ENCODE measurements at regions of chr3 and their contacts with region 1.

Region 1: DNA sequence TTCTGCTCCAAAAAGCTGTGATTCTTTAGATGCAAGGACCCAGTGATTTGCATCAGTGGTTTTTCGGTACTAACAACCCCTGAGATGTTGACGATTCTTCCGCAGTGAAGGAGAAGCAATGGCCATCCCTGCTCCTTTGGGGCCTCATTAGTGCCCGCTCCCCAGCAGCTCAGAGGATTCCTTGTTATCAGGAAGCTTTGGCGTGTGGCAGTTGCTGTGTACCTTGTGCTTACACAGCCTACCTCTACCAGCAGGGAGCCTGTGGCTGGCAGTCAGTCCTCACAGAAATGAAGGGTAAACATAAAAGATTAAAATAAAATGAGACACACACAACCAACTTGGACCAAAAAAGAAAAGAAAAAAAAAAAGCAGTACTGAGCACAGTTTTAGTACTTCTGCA is 55.2 kb downstream of the CNTN3 start:
- DNase-seq: no peak
- ATAC-seq: no peak
- H3K4me3 Mint-ChIP-seq: no peak overlapping the region
- H3K27ac Mint-ChIP-seq: no peak overlapping the region
- H3K4me1 Mint-ChIP-seq: no peaks in the 10 kb centered on the region
- H3K27me3 Mint-ChIP-seq: no peaks in the 10 kb centered on the region

Region 2: DNA sequence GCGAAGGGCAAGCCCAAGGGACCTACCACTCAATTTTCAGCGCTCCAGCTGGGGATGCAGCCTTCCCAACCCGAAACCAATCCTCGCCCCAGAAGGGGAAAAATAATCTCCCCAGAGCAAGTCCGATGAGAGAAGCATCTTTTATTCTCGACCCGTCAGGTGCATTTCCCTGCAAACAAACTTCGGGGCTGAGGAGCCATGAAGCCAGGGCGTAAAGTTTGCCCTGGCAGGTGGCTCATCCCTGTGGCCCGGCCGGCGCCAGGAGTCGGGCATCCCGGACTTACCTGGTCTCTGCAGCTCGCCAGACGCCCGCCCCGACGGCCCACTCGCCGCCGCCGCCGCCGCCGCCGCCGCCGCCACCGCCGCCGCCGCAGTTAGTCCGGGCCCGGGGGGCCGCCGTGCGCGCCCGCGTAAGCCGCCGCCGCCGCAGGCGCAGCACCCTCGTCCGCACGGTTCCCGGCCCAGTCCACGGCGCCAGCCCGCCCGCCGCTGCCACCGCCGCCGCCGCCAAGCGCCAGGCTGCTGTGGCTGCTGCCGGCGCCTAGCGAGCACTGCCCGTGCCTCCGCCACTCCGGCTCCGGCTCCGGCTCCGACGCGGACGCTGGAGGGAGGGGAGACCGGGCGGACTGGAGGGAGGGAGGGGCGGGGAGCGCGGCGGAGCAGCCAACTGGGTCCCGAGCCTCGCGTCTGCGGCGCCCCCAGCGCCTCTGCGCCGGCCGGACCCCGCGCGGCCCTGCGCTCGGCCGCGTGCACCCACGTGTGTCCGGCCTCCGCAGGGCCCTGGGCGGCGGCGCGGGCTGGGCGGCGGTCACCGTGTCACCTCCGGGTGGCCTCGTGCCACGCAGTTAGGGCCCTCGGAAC is 55.1 kb after region 1 on chr3 and contains the start of gene CNTN3:
- CTCF ChIA-PET with region 1: no interaction called
- POLR2A ChIA-PET with region 1: no interaction called
- intact Hi-C with region 1: loop called in 1 of 2 experiments (anchors 10 kb)
- DNase-seq: no peak
- ATAC-seq: no peak
- H3K4me3 Mint-ChIP-seq: no peak within 1 kb of the TSS
- H3K27ac Mint-ChIP-seq: no peak within 1 kb of the TSS
- H3K4me1 Mint-ChIP-seq: no peaks in the 10 kb centered on the region
- H3K27me3 Mint-ChIP-seq: peaks cover 14% of the 10 kb centered on the region
- total RNA-seq, gene CNTN3: not detected

Region 3: DNA sequence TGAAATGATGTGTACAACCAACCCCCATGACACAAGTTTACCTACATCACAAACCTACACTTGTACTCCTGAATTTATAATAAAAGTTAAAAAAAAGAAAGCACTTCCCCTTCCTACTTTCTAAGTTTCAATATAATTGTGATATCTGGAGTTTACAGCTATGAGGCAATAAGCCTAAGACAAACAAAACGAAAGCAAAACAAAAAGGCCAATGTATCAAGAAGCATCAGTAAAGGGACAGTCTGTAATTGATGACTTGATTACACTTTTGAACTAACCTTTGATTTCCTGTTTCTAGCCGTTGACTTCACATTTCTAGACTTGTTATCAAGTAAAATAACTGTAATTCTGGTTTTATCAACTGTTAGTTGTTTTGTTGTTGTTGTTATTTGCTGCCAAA is 242.7 kb after region 1 on chr3:
- CTCF ChIA-PET with region 1: no interaction called
- POLR2A ChIA-PET with region 1: no interaction called
- intact Hi-C with region 1: no loop called
- DNase-seq: no peak
- ATAC-seq: no peak
- H3K4me3 Mint-ChIP-seq: no peak overlapping the region
- H3K27ac Mint-ChIP-seq: no peak overlapping the region
- H3K4me1 Mint-ChIP-seq: no peaks in the 10 kb centered on the region
- H3K27me3 Mint-ChIP-seq: no peaks in the 10 kb centered on the region

Region 4: DNA sequence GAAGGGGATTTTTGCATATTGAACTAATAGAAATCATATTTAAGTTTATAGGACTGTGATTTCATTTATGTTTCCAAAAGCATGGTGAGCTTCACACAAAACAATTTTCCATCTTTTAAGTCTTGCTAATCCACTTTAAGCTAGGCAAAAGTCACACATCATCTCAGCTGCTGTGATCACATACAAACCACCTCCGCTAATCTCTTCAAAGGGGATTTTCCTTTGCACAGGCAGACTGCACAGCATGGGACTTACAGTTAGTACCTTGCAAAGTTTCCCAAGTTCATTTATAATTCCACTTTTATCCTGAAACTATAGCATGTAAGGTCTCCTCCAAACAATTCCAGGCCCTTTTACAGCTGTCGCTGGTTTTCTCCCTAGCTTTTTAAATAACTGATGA is 280.3 kb after region 1 on chr3:
- CTCF ChIA-PET with region 1: no interaction called
- POLR2A ChIA-PET with region 1: no interaction called
- intact Hi-C with region 1: no loop called
- DNase-seq: no peak
- ATAC-seq: no peak
- H3K4me3 Mint-ChIP-seq: no peak overlapping the region
- H3K27ac Mint-ChIP-seq: no peak overlapping the region
- H3K4me1 Mint-ChIP-seq: no peaks in the 10 kb centered on the region
- H3K27me3 Mint-ChIP-seq: no peaks in the 10 kb centered on the region

Measured in activated CD4-positive, alpha-beta T cell treated with anti-CD3 and anti-CD28 coated beads for 36 hours (primary cell).